Right cardiac atrium (tissue), 5 donors: ENCODE measurements at regions of chr7 and their contacts with region 1.

Region 1: GRCh38 chr7:130758429-130759056 is 24.5 kb upstream of the KLF14 start:
- DNase-seq: no peak
- ATAC-seq: no peak
- H3K4me3 ChIP-seq: no peak overlapping the region
- H3K27ac ChIP-seq: no peak overlapping the region
- H3K4me1 ChIP-seq: no peaks in the 10 kb centered on the region
- H3K27me3 ChIP-seq: no peaks in the 10 kb centered on the region

Region 2: DNA sequence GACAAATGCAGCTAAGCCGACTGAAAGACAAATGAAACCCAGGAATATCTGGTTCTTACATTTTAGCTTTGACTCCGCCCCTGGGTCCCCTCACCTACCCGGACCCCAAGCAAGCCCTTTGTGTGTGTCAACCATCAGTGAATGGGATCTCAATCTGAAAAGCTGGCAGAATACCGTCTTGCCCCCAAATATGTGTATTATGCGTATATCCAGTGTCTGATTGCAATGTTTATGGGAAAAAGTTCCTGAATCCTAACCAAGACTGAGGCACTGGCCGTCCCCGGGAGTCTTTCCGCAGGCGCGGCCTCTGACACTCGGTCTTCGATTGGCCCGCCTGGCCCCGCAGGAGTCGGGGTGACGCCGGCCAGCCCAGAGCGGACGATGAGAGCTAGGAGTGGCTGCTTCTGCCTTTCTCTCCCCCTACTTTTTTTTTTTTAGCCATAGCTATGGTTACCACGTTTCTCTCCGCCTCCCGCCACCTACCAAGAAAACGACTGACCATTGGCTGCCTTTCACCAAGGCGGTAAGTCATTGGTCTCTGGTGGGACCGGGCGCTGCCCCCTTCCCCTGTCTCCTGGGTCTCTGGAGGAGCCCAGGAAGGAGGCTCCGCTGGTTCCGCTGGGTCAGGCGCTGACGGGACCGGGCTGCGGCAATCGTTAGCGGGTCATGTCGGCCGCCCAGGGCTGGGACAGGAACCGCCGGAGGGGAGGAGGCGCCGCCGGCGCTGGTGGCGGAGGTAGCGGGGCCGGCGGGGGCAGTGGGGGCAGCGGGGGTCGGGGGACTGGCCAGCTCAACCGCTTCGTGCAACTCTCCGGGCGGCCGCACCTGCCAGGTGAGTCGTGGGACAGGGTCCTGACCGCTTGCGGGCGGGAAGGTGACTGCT is 688.3 kb before region 1 on chr7 and contains the start of gene KLHDC10:
- intact Hi-C with region 1: loop called in 1 of 4 experiments (anchors 5 kb)
- DNase-seq: peak; percentile 97 to 98 (median 98)
- ATAC-seq: peak; percentile 99 to 100
- H3K4me3 ChIP-seq: peak within 1 kb of the TSS; percentile 73
- H3K27ac ChIP-seq: peak within 1 kb of the TSS; percentile 69
- H3K4me1 ChIP-seq: no peaks in the 10 kb centered on the region
- H3K27me3 ChIP-seq: no peaks in the 10 kb centered on the region
- total RNA-seq, gene KLHDC10: 24.3 to 29.4 (median 26.5) TPM

Region 3: GRCh38 chr7:131145026-131145425 is 386.5 kb after region 1 on chr7:
- intact Hi-C with region 1: no loop called
- DNase-seq: no peak
- ATAC-seq: no peak
- H3K4me3 ChIP-seq: no peak overlapping the region
- H3K27ac ChIP-seq: no peak overlapping the region
- H3K4me1 ChIP-seq: peaks cover under 1% of the 10 kb centered on the region
- H3K27me3 ChIP-seq: no peaks in the 10 kb centered on the region